Ascending aorta (tissue), 2 donors: ENCODE measurements at regions of chr12 and their contacts with region 1.

Region 1: DNA sequence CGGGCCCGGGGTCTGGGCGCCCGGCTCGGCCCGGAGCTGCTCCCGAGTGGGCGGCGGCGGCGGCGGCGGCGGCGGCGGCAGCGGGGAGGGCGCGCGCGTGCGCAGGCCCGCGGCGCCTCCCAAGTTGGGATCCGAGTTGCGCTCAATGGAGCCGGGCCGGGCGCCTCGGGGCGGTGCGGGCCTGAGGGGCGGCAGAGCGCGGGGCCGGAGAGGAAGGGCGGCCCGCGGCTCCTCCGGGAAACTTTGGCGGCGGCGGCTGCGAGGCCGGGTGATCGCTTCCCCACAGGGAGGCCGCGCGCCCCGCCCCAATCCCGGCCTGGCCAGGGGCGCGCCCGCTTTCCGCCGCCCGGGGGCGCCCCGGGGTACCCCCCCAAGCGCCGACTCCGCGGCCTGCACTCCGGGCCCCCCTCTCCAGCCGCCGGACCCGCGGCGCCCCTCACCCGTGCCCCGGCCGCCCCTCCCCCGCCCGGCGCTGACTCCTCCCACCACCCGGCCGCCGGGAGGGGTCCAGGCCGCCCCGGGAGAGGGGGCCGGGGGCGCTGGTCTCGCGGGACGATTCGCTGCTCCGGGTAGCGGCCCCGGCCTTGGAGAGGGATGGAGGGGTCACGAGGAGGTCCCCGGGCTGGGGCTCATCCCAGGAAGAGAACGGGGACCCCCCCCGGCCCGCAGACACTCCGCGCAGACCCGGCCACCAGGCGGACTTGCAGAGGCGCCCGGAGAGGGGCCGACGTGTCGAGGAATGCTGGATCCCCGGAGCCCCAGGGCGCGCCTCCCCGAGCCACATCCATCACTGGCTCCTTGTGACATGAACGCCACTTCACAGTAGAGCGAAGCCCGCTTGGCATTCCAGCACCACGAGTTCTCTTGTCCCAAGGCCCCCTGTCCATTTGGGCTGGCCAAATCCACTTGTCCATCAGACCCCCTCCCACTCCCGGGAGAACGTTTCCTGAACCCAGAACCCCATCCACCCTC is at the start of gene RILPL1:
- DNase-seq: peak in 1 of 2 donors; percentile 68
- H3K4me3 ChIP-seq: peak within 1 kb of the TSS; percentile 89 to 93
- H3K27ac ChIP-seq: peak within 1 kb of the TSS; percentile 87 to 95
- H3K4me1 ChIP-seq: peaks cover 0 to 22% of the 10 kb centered on the region in 2 donors
- H3K27me3 ChIP-seq: no peaks in the 10 kb centered on the region
- CTCF ChIP-seq: peak; percentile 11 to 41 (median 22)
- total RNA-seq, gene RILPL1: 1.5 TPM

Region 2: GRCh38 chr12:123141615-123142517 is 392.1 kb before region 1 on chr12:
- intact Hi-C with region 1: no loop called
- DNase-seq: peak in 1 of 2 donors; percentile 84
- H3K4me3 ChIP-seq: no peak overlapping the region
- H3K27ac ChIP-seq: peak overlapping the region; percentile 66 to 75
- H3K4me1 ChIP-seq: peaks cover 19 to 31% of the 10 kb centered on the region in 2 donors
- H3K27me3 ChIP-seq: no peaks in the 10 kb centered on the region
- CTCF ChIP-seq: no peak

Region 3: GRCh38 chr12:123398550-123399254 is 135.3 kb before region 1 on chr12:
- intact Hi-C with region 1: loop called (anchors 2 kb)
- DNase-seq: peak; percentile 46 to 93
- H3K4me3 ChIP-seq: peak overlapping the region; percentile 37 to 46
- H3K27ac ChIP-seq: peak overlapping the region; percentile 86 to 93
- H3K4me1 ChIP-seq: peaks cover 24 to 47% of the 10 kb centered on the region in 2 donors
- H3K27me3 ChIP-seq: no peaks in the 10 kb centered on the region
- CTCF ChIP-seq: no peak

Region 4: GRCh38 chr12:123591702-123592481 is 57.9 kb after region 1 on chr12:
- intact Hi-C with region 1: no loop called
- DNase-seq: peak in 1 of 2 donors; percentile 37
- H3K4me3 ChIP-seq: no peak overlapping the region
- H3K27ac ChIP-seq: no peak overlapping the region
- H3K4me1 ChIP-seq: peaks cover 3 to 27% of the 10 kb centered on the region in 2 donors
- H3K27me3 ChIP-seq: no peaks in the 10 kb centered on the region
- CTCF ChIP-seq: no peak

Region 5: GRCh38 chr12:123645878-123646277 is 111.9 kb after region 1 on chr12:
- intact Hi-C with region 1: no loop called
- DNase-seq: no peak
- H3K4me3 ChIP-seq: no peak overlapping the region
- H3K27ac ChIP-seq: no peak overlapping the region
- H3K4me1 ChIP-seq: no peaks in the 10 kb centered on the region
- H3K27me3 ChIP-seq: no peaks in the 10 kb centered on the region
- CTCF ChIP-seq: no peak

Region 6: DNA sequence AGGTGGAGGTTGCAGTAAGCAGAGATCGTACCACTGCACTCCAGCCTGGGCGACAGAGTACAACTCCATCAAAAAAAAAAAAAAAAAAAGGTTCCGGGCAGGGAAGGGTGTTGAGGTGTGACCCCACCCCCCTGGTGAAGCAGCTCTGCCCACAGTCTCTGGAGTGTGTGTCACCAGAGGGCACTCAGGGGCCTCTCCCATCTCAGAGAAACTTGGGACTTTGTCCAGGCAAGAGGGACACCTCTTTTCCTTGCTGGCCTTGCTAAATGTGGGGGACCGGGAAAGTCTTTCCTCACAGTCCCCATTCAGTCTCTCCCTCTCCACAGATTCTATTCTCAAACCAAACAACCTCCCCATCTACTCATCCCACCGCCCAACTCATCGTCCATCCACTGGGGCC is 804.5 kb after region 1 on chr12:
- intact Hi-C with region 1: no loop called
- DNase-seq: no peak
- H3K4me3 ChIP-seq: no peak overlapping the region
- H3K27ac ChIP-seq: no peak overlapping the region
- H3K4me1 ChIP-seq: no peaks in the 10 kb centered on the region
- H3K27me3 ChIP-seq: no peaks in the 10 kb centered on the region
- CTCF ChIP-seq: no peak